Naive thymus-derived CD4-positive, alpha-beta T cell (primary cell): ENCODE measurements at regions of chr2 and their contacts with region 1.

Region 1: GRCh38 chr2:172465417-172466334 is 38.3 kb downstream of the ITGA6 start:
- DNase-seq: peak in 8 of 9 donors; percentile 58 to 83 (median 76)
- ATAC-seq: peak; percentile 65
- H3K4me3 ChIP-seq: peak overlapping the region; percentile 68
- H3K4me3 Mint-ChIP-seq: peak overlapping the region; percentile 21 to 93 (median 84)
- H3K27ac ChIP-seq: peak overlapping the region; percentile 69
- H3K27ac Mint-ChIP-seq: peak overlapping the region; percentile 34 to 98 (median 91)
- H3K4me1 ChIP-seq: peaks cover 50 to 54% of the 10 kb centered on the region in 2 donors
- H3K4me1 Mint-ChIP-seq: peaks cover 54 to 97% (median 84%) of the 10 kb centered on the region in 7 donors
- H3K27me3 ChIP-seq: no peaks in the 10 kb centered on the region
- H3K27me3 Mint-ChIP-seq: peaks cover 0 to 2% (median 0%) of the 10 kb centered on the region in 5 donors

Region 2: DNA sequence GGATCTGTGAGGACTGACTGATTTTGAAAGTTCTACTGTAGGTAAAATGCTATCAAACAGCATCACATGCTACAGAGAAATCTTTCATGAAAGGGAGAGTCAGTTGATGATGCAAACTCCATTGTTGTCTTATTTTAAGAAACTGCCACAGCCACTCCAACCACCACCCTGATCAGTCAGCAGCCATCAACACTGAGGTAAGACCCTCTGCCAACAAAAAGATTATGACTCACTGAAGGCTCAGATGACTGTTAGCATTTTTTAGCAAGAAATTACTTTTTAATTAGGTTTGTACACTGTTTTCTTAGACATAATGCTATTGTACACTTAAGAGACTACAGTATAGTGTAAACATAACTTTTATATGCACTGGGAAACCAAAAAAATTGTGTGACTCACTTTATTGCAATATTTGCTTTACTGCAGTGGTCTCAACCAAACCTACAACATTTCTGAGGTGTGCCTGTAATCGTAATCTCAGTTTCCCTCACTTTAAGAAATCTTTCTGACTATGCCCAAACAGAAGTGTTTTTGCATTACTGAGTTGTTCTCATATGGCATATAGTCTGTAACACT is 1074.6 kb before region 1 on chr2:
- CTCF ChIA-PET with region 1: no interaction called
- POLR2A ChIA-PET with region 1: no interaction called
- intact Hi-C with region 1: no loop called
- DNase-seq: no peak
- ATAC-seq: no peak
- H3K4me3 ChIP-seq: no peak overlapping the region
- H3K4me3 Mint-ChIP-seq: no peak overlapping the region
- H3K27ac ChIP-seq: no peak overlapping the region
- H3K27ac Mint-ChIP-seq: peak overlapping the region in 2 of 9 donors; percentile 28 to 30
- H3K4me1 ChIP-seq: no peaks in the 10 kb centered on the region
- H3K4me1 Mint-ChIP-seq: peaks cover 0 to 31% (median 10%) of the 10 kb centered on the region in 7 donors
- H3K27me3 ChIP-seq: no peaks in the 10 kb centered on the region
- H3K27me3 Mint-ChIP-seq: no peaks in the 10 kb centered on the region

Region 3: DNA sequence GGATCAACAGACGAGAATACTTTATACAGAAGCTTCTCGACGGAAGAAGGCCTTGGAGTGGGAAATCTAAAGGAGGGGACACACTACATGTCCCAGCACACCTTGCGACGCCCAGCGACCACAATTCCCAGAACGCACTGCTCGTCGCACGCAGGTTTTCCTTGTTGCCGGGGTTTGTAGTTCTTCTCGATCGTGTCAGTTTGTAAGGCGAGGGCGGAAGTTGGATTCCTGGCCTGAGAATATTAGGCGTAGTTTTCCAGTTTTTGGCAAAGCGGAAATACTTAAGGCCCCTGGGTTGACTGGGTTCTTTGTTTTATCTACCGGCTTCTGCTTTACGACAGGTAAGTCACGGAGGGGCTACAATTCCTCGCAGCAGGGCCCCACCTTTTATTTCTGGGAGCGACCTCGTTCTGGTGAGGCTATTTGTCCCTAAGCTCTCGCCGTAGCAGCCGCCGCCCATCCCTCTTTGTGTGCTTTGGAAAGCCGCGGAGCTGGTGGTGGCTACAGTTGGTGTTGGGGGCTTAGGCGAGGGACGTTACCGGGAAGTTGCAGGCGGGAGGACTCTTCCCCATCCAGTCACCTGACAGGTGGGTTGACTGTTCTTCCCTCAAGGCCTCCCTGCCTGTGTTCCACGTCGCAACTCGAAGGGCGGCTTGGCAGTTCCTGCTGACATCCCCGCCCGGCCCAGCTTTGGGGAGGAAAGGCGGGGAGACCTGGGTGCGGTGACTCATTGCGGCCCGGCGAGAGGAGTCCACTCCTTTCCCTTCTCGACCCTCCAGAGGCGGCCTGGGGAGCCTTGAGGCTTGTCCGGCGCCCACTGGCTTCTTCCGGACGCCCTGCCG is 778.2 kb before region 1 on chr2 and contains the start of gene DYNC1I2:
- CTCF ChIA-PET with region 1: no interaction called
- POLR2A ChIA-PET with region 1: no interaction called
- intact Hi-C with region 1: loop called (anchors 1 to 5 kb)
- DNase-seq: peak; percentile 38 to 82 (median 79)
- ATAC-seq: peak; percentile 90
- H3K4me3 ChIP-seq: peak within 1 kb of the TSS; percentile 96
- H3K4me3 Mint-ChIP-seq: peak within 1 kb of the TSS; percentile 89 to 98 (median 93)
- H3K27ac ChIP-seq: peak within 1 kb of the TSS; percentile 67
- H3K27ac Mint-ChIP-seq: peak within 1 kb of the TSS; percentile 77 to 95 (median 85)
- H3K4me1 ChIP-seq: peaks cover 7 to 10% of the 10 kb centered on the region in 2 donors
- H3K4me1 Mint-ChIP-seq: peaks cover 11 to 43% (median 24%) of the 10 kb centered on the region in 7 donors
- H3K27me3 ChIP-seq: no peaks in the 10 kb centered on the region
- H3K27me3 Mint-ChIP-seq: peaks cover 0 to 21% (median 0%) of the 10 kb centered on the region in 5 donors
- total RNA-seq, gene DYNC1I2: 21.5 to 57.0 (median 41.7) TPM

Region 4: DNA sequence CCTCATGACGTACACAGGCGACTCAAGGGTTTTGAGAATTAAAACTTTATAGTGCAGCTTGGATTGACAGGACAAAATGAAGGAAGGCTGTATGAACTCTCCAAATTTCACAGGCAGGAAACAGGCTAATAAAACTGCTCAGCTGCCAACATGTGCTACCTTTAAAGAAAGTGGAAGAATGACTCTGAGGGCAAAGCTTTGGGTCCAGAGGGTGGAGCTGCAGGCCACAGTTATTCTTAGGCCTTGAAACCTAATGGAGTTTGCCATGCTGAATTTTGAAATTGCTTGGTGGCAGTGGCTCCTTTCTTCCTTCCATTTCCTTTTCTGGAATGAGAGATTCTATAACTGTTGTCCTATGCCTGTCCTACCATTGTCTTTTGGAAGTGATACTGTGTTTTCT is 508.6 kb before region 1 on chr2:
- CTCF ChIA-PET with region 1: interaction called, 3 read pairs
- POLR2A ChIA-PET with region 1: no interaction called
- intact Hi-C with region 1: loop called in 1 of 2 experiments (anchors 5 kb)
- DNase-seq: no peak
- ATAC-seq: no peak
- H3K4me3 ChIP-seq: no peak overlapping the region
- H3K4me3 Mint-ChIP-seq: no peak overlapping the region
- H3K27ac ChIP-seq: no peak overlapping the region
- H3K27ac Mint-ChIP-seq: peak overlapping the region in 1 of 9 donors; percentile 19
- H3K4me1 ChIP-seq: peaks cover 6 to 8% of the 10 kb centered on the region in 2 donors
- H3K4me1 Mint-ChIP-seq: peaks cover 15 to 43% (median 26%) of the 10 kb centered on the region in 7 donors
- H3K27me3 ChIP-seq: no peaks in the 10 kb centered on the region
- H3K27me3 Mint-ChIP-seq: no peaks in the 10 kb centered on the region

Region 5: GRCh38 chr2:172179045-172179701 is 286.5 kb before region 1 on chr2:
- CTCF ChIA-PET with region 1: interaction called, 129 read pairs
- POLR2A ChIA-PET with region 1: interaction called, 4 read pairs
- intact Hi-C with region 1: no loop called
- DNase-seq: no peak
- ATAC-seq: no peak
- H3K4me3 ChIP-seq: no peak overlapping the region
- H3K4me3 Mint-ChIP-seq: peak overlapping the region in 2 of 10 donors; percentile 7 to 14
- H3K27ac ChIP-seq: no peak overlapping the region
- H3K27ac Mint-ChIP-seq: peak overlapping the region in 1 of 9 donors; percentile 49
- H3K4me1 ChIP-seq: peaks cover 9 to 10% of the 10 kb centered on the region in 2 donors
- H3K4me1 Mint-ChIP-seq: peaks cover 6 to 32% (median 26%) of the 10 kb centered on the region in 7 donors
- H3K27me3 ChIP-seq: no peaks in the 10 kb centered on the region
- H3K27me3 Mint-ChIP-seq: peaks cover 0 to 9% (median 0%) of the 10 kb centered on the region in 5 donors

Region 6: DNA sequence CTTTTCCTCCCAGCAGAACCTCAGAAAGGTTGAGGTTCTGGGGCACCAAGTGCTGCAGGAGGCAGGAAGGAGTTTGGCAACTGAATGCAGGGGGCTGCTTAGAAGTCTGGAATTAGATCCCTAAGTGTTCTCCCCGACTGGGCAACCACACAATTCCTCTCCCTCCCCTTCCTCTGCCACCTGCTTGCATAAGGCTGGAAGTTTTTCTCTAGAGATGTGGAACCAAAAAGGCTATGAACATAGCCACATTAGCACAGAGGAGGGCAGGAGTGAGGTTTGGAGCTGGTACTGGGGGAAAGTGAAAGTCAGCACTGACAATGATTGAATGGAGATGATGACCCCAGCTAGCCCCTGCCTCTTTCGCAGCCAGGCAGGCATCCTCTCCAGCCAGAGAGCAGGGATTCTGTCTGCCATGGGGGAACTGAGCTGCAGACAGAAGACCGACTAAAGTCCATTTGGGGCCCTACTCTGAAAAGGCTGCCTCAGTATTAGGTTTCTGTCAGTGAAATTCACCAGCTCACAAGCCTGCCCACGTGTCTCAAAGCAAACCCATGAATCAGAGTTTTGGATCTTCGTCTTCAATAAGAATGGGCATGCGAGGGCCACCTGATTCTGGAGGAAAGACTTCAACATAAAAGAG is 126.2 kb before region 1 on chr2:
- CTCF ChIA-PET with region 1: interaction called, 21 read pairs
- POLR2A ChIA-PET with region 1: no interaction called
- intact Hi-C with region 1: loop called (anchors 1 to 2 kb)
- DNase-seq: peak in 5 of 9 donors; percentile 14 to 33 (median 22)
- ATAC-seq: peak; percentile 63
- H3K4me3 ChIP-seq: peak overlapping the region; percentile 41
- H3K4me3 Mint-ChIP-seq: peak overlapping the region; percentile 66 to 85 (median 79)
- H3K27ac ChIP-seq: no peak overlapping the region
- H3K27ac Mint-ChIP-seq: peak overlapping the region in 8 of 9 donors; percentile 39 to 83 (median 76)
- H3K4me1 ChIP-seq: peaks cover 4 to 15% of the 10 kb centered on the region in 2 donors
- H3K4me1 Mint-ChIP-seq: peaks cover 15 to 45% (median 32%) of the 10 kb centered on the region in 7 donors
- H3K27me3 ChIP-seq: peaks cover 0 to 2% of the 10 kb centered on the region in 2 donors
- H3K27me3 Mint-ChIP-seq: peaks cover 0 to 2% (median 0%) of the 10 kb centered on the region in 5 donors

Region 7: GRCh38 chr2:172496160-172496608 is 30.5 kb after region 1 on chr2:
- CTCF ChIA-PET with region 1: interaction called, 9 read pairs
- POLR2A ChIA-PET with region 1: interaction called, 12 read pairs
- intact Hi-C with region 1: loop called in 1 of 2 experiments (anchors 1 kb)
- DNase-seq: peak in 7 of 9 donors; percentile 72 to 88 (median 83)
- ATAC-seq: peak; percentile 94
- H3K4me3 ChIP-seq: peak overlapping the region; percentile 22
- H3K4me3 Mint-ChIP-seq: peak overlapping the region; percentile 54 to 86 (median 77)
- H3K27ac ChIP-seq: peak overlapping the region; percentile 68
- H3K27ac Mint-ChIP-seq: peak overlapping the region; percentile 86 to 99 (median 97)
- H3K4me1 ChIP-seq: peaks cover 22 to 83% of the 10 kb centered on the region in 2 donors
- H3K4me1 Mint-ChIP-seq: peaks cover 32 to 94% (median 85%) of the 10 kb centered on the region in 7 donors
- H3K27me3 ChIP-seq: no peaks in the 10 kb centered on the region
- H3K27me3 Mint-ChIP-seq: no peaks in the 10 kb centered on the region